Caco-2 (cell line): ENCODE measurements at regions of chr10 and their contacts with region 1.

Region 1: DNA sequence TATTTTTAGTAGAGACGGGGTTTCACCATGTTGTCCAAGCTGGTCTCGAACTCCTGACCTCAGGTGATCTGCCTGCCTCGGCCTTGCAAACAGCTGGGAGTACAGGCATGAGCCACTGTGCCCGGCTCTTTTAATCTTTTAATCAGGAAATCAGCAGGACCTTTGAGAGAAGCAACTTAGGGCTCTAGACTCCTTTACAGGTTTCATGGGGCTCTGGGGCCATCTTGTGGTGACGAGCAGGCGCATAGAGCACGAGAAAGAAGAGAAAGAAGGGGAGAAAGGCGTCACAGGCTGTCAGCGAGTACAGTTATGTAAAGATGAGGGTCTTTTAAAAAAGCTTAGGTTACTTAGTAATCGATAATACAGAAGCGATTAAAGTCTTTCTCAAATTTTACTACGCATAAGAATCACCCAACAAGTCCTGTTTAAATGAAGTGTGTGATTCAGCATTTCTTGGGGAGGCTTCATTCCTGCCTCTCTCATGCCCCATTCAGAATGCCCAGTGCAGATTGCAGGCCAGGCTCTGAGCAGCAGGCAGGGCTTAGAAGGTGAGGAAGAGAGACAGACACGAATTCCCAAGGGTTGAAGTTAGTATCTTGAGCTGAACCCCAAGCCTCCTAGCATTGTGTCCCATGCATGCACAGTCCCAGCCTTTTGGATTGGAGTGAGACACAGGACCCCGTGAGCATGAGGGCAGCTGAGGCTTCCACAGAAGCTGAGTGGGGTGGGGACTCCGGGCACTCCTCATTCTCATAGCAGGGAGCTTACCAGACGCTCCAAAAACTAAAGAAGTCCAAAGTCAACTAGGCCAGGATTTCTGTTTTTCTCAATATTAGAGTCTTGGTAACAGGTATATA is 23.6 kb upstream of the PFKP start:
- DNase-seq: peak; percentile 81
- H3K4me3 ChIP-seq: no peak overlapping the region
- H3K4me3 Mint-ChIP-seq: no peak overlapping the region
- H3K27ac Mint-ChIP-seq: no peak overlapping the region
- H3K4me1 ChIP-seq: peaks cover 22% of the 10 kb centered on the region
- H3K4me1 Mint-ChIP-seq: peaks cover 17% of the 10 kb centered on the region
- H3K27me3 ChIP-seq: no peaks in the 10 kb centered on the region
- H3K27me3 Mint-ChIP-seq: peaks cover 2% of the 10 kb centered on the region
- CTCF ChIP-seq: peak; percentile 89 to 95

Region 2: DNA sequence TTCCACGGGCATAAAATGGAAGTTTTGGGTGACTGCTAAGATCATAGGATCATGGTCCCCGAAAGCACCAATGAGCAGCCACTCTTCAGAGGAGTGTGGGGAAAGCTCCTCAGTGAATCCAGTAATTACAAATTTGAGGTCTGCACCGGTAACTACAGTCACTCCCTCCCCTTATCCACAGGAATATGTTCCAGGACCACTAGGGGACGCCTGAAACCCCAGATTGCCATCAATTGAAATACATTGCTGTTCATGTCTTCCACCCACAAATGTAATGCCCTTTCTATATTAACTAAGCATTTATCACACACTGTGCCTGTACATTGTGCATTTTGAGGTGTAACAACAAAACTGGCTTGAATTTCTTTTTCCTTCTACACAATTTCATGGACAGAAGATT is 424.3 kb before region 1 on chr10:
- CTCF ChIA-PET with region 1: no interaction called
- POLR2A ChIA-PET with region 1: no interaction called
- intact Hi-C with region 1: loop called (anchors 1 kb)
- DNase-seq: peak in 1 of 2 experiments; percentile 49
- H3K4me3 ChIP-seq: no peak overlapping the region
- H3K4me3 Mint-ChIP-seq: no peak overlapping the region
- H3K27ac Mint-ChIP-seq: no peak overlapping the region
- H3K4me1 ChIP-seq: no peaks in the 10 kb centered on the region
- H3K4me1 Mint-ChIP-seq: no peaks in the 10 kb centered on the region
- H3K27me3 ChIP-seq: no peaks in the 10 kb centered on the region
- H3K27me3 Mint-ChIP-seq: peaks cover 22% of the 10 kb centered on the region
- CTCF ChIP-seq: peak; percentile 72 to 86

Region 3: GRCh38 chr10:2927958-2928840 is 115.5 kb before region 1 on chr10:
- CTCF ChIA-PET with region 1: interaction called, 23 read pairs
- POLR2A ChIA-PET with region 1: no interaction called
- intact Hi-C with region 1: loop called (anchors 1 kb)
- DNase-seq: peak; percentile 75 to 82
- H3K4me3 ChIP-seq: no peak overlapping the region
- H3K4me3 Mint-ChIP-seq: no peak overlapping the region
- H3K27ac Mint-ChIP-seq: no peak overlapping the region
- H3K4me1 ChIP-seq: no peaks in the 10 kb centered on the region
- H3K4me1 Mint-ChIP-seq: no peaks in the 10 kb centered on the region
- H3K27me3 ChIP-seq: no peaks in the 10 kb centered on the region
- H3K27me3 Mint-ChIP-seq: peaks cover 14% of the 10 kb centered on the region
- CTCF ChIP-seq: peak; percentile 82

Region 4: GRCh38 chr10:2978111-2978510 is 65.6 kb before region 1 on chr10:
- CTCF ChIA-PET with region 1: no interaction called
- POLR2A ChIA-PET with region 1: no interaction called
- intact Hi-C with region 1: loop called (anchors 1 kb)
- DNase-seq: peak in 1 of 2 experiments; percentile 50
- H3K4me3 ChIP-seq: no peak overlapping the region
- H3K4me3 Mint-ChIP-seq: no peak overlapping the region
- H3K27ac Mint-ChIP-seq: no peak overlapping the region
- H3K4me1 ChIP-seq: no peaks in the 10 kb centered on the region; the same call in 1 of the 2 replicates
- H3K4me1 Mint-ChIP-seq: no peaks in the 10 kb centered on the region
- H3K27me3 ChIP-seq: no peaks in the 10 kb centered on the region
- H3K27me3 Mint-ChIP-seq: peaks cover 7% of the 10 kb centered on the region
- CTCF ChIP-seq: peak; percentile 70 to 79